T-cell (primary cell): ENCODE measurements at regions of chr6 and their contacts with region 1.

Region 1: DNA sequence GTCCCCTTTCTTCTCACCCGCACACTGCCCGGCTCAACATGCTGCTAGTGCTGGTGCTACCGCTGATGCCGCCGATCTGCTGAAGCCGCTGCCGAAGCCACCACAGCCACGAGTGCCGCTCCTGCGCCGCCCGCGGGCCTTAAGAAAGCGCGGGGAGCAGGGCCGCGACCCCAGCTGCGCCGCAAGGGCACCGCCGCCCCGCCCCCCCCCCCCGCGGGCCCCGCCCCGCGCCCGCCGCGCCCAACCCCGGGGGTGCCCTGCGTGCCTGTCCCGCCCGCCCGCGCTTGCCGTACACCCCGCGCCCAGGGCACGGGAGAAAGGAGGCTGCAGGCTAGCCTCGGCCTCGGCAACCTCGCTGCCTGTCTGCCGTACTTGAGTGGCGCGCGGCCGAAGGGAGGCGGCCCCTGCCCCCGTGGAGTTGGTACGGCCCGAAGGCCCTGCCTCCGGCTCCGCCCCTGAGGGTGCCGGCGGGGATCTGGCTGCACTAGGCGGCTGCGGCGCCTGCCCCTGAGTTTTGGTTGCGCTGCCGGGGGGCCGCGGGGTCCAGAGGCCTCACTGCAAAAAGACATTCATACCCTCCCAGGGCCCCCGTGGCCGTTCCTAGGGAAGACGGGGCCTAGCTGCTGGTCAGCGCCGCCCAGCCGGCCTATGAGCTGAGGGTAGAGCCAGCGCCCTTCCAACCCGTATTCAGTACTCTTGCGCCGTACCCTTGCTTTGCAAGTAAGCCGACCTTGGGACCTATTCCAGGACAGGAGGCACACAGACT is at the start of gene SOD2:
- DNase-seq: peak; percentile 54 to 88 (median 75)
- ATAC-seq: peak; percentile 77 to 84 (median 80)
- H3K4me3 ChIP-seq: peak within 1 kb of the TSS; percentile 79 to 88
- H3K4me3 Mint-ChIP-seq: peak within 1 kb of the TSS; percentile 82 to 97 (median 92)
- H3K27ac ChIP-seq: peak within 1 kb of the TSS; percentile 80
- H3K27ac Mint-ChIP-seq: peak within 1 kb of the TSS; percentile 94 to 98
- H3K4me1 ChIP-seq: peaks cover 28 to 36% of the 10 kb centered on the region in 2 experiments
- H3K4me1 Mint-ChIP-seq: peaks cover 38 to 56% (median 52%) of the 10 kb centered on the region in 3 donors
- H3K27me3 ChIP-seq: no peaks in the 10 kb centered on the region
- H3K27me3 Mint-ChIP-seq: no peaks in the 10 kb centered on the region
- total RNA-seq, gene SOD2: 81.2 to 143 (median 112) TPM

Region 2: GRCh38 chr6:159718634-159719033 is 25.3 kb after region 1 on chr6:
- CTCF ChIA-PET with region 1: interaction called, 5 to 8 read pairs
- POLR2A ChIA-PET with region 1: interaction called, 3 to 11 read pairs
- DNase-seq: no peak
- ATAC-seq: no peak
- H3K4me3 ChIP-seq: no peak overlapping the region
- H3K4me3 Mint-ChIP-seq: no peak overlapping the region
- H3K27ac ChIP-seq: no peak overlapping the region
- H3K27ac Mint-ChIP-seq: no peak overlapping the region
- H3K4me1 ChIP-seq: peaks cover 0 to 2% of the 10 kb centered on the region in 2 experiments
- H3K4me1 Mint-ChIP-seq: peaks cover 10 to 12% (median 11%) of the 10 kb centered on the region in 3 donors
- H3K27me3 ChIP-seq: no peaks in the 10 kb centered on the region
- H3K27me3 Mint-ChIP-seq: no peaks in the 10 kb centered on the region

Region 3: GRCh38 chr6:159726918-159727716 is 33.8 kb after region 1 on chr6 and contains the start of gene WTAP:
- CTCF ChIA-PET with region 1: interaction called, 3 to 10 read pairs
- POLR2A ChIA-PET with region 1: interaction called, 8 to 9 read pairs
- DNase-seq: peak; percentile 93 to 99 (median 96)
- ATAC-seq: peak; percentile 85 to 91 (median 86)
- H3K4me3 ChIP-seq: peak within 1 kb of the TSS; percentile 91 to 93
- H3K4me3 Mint-ChIP-seq: peak within 1 kb of the TSS; percentile 95 to 96 (median 96)
- H3K27ac ChIP-seq: peak within 1 kb of the TSS; percentile 95
- H3K27ac Mint-ChIP-seq: peak within 1 kb of the TSS; percentile 99
- H3K4me1 ChIP-seq: peaks cover 22 to 35% of the 10 kb centered on the region in 2 experiments
- H3K4me1 Mint-ChIP-seq: peaks cover 69 to 71% (median 69%) of the 10 kb centered on the region in 3 donors
- H3K27me3 ChIP-seq: no peaks in the 10 kb centered on the region
- H3K27me3 Mint-ChIP-seq: no peaks in the 10 kb centered on the region
- total RNA-seq, gene WTAP: 119 to 177 (median 126) TPM

Region 4: GRCh38 chr6:159790149-159790955 is 97.0 kb after region 1 on chr6 and contains the start of gene MRPL18:
- CTCF ChIA-PET with region 1: interaction called in 1 of 2 experiments, 17 read pairs
- POLR2A ChIA-PET with region 1: interaction called, 6 to 8 read pairs
- DNase-seq: peak; percentile 69 to 94 (median 86)
- ATAC-seq: peak; percentile 84 to 88 (median 86)
- H3K4me3 ChIP-seq: peak within 1 kb of the TSS; percentile 96
- H3K4me3 Mint-ChIP-seq: peak within 1 kb of the TSS; percentile 96 to 99 (median 98)
- H3K27ac ChIP-seq: peak within 1 kb of the TSS; percentile 96
- H3K27ac Mint-ChIP-seq: peak within 1 kb of the TSS; percentile 97 to 99
- H3K4me1 ChIP-seq: peaks cover 25 to 31% of the 10 kb centered on the region in 2 experiments
- H3K4me1 Mint-ChIP-seq: peaks cover 58 to 69% (median 63%) of the 10 kb centered on the region in 3 donors
- H3K27me3 ChIP-seq: no peaks in the 10 kb centered on the region
- H3K27me3 Mint-ChIP-seq: no peaks in the 10 kb centered on the region
- total RNA-seq, gene MRPL18: 19.8 to 44.4 (median 36.6) TPM